ENCODE measurements at regions of chr1 and their contacts with region 1.

Region 1: GRCh38 chr1:206663832-206664652 is 20.7 kb upstream of the MAPKAPK2 start:
- DNase-seq: peak; percentile 86
- ATAC-seq: peak; percentile 80
- H3K4me3 ChIP-seq: peak overlapping the region in 2 of 5 experiments; percentile 31 to 34
- H3K4me3 Mint-ChIP-seq: peak overlapping the region; percentile 64
- H3K27ac ChIP-seq: no peak overlapping the region
- H3K27ac Mint-ChIP-seq: no peak overlapping the region
- H3K4me1 ChIP-seq: peaks cover 14 to 16% of the 10 kb centered on the region in 2 donors
- H3K4me1 Mint-ChIP-seq: peaks cover 24% of the 10 kb centered on the region
- H3K27me3 ChIP-seq: peaks cover 0 to 48% (median 15%) of the 10 kb centered on the region in 4 experiments
- H3K27me3 Mint-ChIP-seq: peaks cover 40% of the 10 kb centered on the region
- CTCF ChIP-seq: peak; percentile 89

Region 2: GRCh38 chr1:206479183-206480125 is 184.6 kb before region 1 on chr1:
- CTCF ChIA-PET with region 1: interaction called, 34 read pairs
- POLR2A ChIA-PET with region 1: no interaction called
- intact Hi-C with region 1: loop called (anchors 1 kb)
- DNase-seq: peak; percentile 80
- ATAC-seq: peak; percentile 79
- H3K4me3 ChIP-seq: no peak overlapping the region
- H3K4me3 Mint-ChIP-seq: no peak overlapping the region
- H3K27ac ChIP-seq: no peak overlapping the region
- H3K27ac Mint-ChIP-seq: peak overlapping the region; percentile 42
- H3K4me1 ChIP-seq: no peaks in the 10 kb centered on the region
- H3K4me1 Mint-ChIP-seq: peaks cover 4% of the 10 kb centered on the region
- H3K27me3 ChIP-seq: no peaks in the 10 kb centered on the region
- H3K27me3 Mint-ChIP-seq: no peaks in the 10 kb centered on the region
- CTCF ChIP-seq: peak; percentile 78

Region 3: GRCh38 chr1:206612129-206612876 is 51.7 kb before region 1 on chr1 and contains the start of gene EIF2D:
- CTCF ChIA-PET with region 1: interaction called, 48 read pairs
- POLR2A ChIA-PET with region 1: interaction called, 5 read pairs
- intact Hi-C with region 1: loop called (anchors 1 kb)
- DNase-seq: peak; percentile 96
- ATAC-seq: peak; percentile 100
- H3K4me3 ChIP-seq: peak within 1 kb of the TSS; percentile 61 to 87 (median 86)
- H3K4me3 Mint-ChIP-seq: peak within 1 kb of the TSS; percentile 93
- H3K27ac ChIP-seq: peak within 1 kb of the TSS; percentile 70 to 93
- H3K27ac Mint-ChIP-seq: peak within 1 kb of the TSS; percentile 96
- H3K4me1 ChIP-seq: peaks cover 8 to 12% of the 10 kb centered on the region in 2 donors
- H3K4me1 Mint-ChIP-seq: peaks cover 19% of the 10 kb centered on the region
- H3K27me3 ChIP-seq: no peaks in the 10 kb centered on the region
- H3K27me3 Mint-ChIP-seq: no peaks in the 10 kb centered on the region
- CTCF ChIP-seq: peak; percentile 88
- total RNA-seq, gene EIF2D: 60.6 and 62.2 TPM in 2 replicates

Region 4: GRCh38 chr1:206684478-206685333 is 20.7 kb after region 1 on chr1 and contains the start of gene MAPKAPK2:
- CTCF ChIA-PET with region 1: interaction called, 23 read pairs
- POLR2A ChIA-PET with region 1: interaction called, 4 read pairs
- intact Hi-C with region 1: loop called (anchors 1 kb)
- DNase-seq: peak; percentile 83
- ATAC-seq: peak; percentile 70
- H3K4me3 ChIP-seq: peak within 1 kb of the TSS; percentile 69 to 91 (median 87)
- H3K4me3 Mint-ChIP-seq: peak within 1 kb of the TSS; percentile 100
- H3K27ac ChIP-seq: peak within 1 kb of the TSS; percentile 76 to 86
- H3K27ac Mint-ChIP-seq: peak within 1 kb of the TSS; percentile 96
- H3K4me1 ChIP-seq: peaks cover 54 to 72% of the 10 kb centered on the region in 2 donors
- H3K4me1 Mint-ChIP-seq: peaks cover 82% of the 10 kb centered on the region
- H3K27me3 ChIP-seq: no peaks in the 10 kb centered on the region
- H3K27me3 Mint-ChIP-seq: no peaks in the 10 kb centered on the region
- CTCF ChIP-seq: no peak
- total RNA-seq, gene MAPKAPK2: 85.8 and 91.1 TPM in 2 replicates

Region 5: DNA sequence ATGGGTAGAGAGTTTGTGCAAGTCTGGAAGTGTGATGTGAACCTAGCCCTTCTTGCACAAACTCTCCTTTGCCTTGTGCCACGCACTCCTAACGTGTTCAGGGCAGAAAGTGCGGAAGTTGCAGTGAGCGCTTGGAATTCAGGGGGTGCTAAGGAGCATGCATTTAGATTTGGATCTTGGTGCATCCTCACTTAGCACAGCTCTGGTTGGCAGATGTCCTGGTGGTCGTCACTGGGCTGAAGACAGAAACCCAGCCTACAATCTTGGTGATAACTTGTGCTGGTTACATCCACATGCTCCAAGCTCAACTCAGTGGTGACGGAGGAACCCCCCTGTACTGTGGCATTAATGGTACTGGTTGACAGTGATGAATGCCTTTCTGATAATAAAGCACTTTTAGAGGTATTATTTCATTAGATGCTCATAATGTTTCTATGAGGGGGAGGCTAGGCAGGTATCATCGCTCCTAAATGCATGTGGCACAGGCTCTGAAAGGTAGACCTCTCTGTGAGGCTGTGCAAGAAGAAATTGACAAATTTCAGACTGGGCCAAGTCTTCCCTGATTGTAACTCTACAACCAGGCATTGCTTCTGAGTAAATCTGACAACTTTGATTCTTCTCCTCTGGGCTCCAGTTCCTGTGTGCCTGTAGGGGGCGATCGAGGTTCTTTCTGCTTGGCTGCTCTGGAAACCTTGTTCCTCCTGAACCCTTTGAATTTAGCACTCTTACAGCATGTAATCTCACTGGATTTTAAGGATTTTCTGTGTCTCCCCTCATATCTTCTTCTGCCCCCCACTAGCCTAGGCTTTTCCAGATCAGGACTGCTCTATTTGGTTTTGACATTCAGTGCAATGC is 61.3 kb after region 1 on chr1:
- CTCF ChIA-PET with region 1: interaction called, 145 read pairs
- POLR2A ChIA-PET with region 1: interaction called, 7 read pairs
- intact Hi-C with region 1: loop called (anchors 2 kb)
- DNase-seq: peak; percentile 68
- ATAC-seq: peak; percentile 46
- H3K4me3 ChIP-seq: no peak overlapping the region
- H3K4me3 Mint-ChIP-seq: peak overlapping the region; percentile 18
- H3K27ac ChIP-seq: no peak overlapping the region
- H3K27ac Mint-ChIP-seq: peak overlapping the region; percentile 65
- H3K4me1 ChIP-seq: peaks cover 32 to 33% of the 10 kb centered on the region in 2 donors
- H3K4me1 Mint-ChIP-seq: peaks cover 60% of the 10 kb centered on the region
- H3K27me3 ChIP-seq: no peaks in the 10 kb centered on the region
- H3K27me3 Mint-ChIP-seq: no peaks in the 10 kb centered on the region
- CTCF ChIP-seq: peak; percentile 28

Region 6: GRCh38 chr1:206930210-206930798 is 266.3 kb after region 1 on chr1:
- CTCF ChIA-PET with region 1: interaction called, 18 read pairs
- POLR2A ChIA-PET with region 1: no interaction called
- intact Hi-C with region 1: no loop called
- DNase-seq: peak; percentile 79
- ATAC-seq: peak; percentile 78
- H3K4me3 ChIP-seq: peak overlapping the region in 4 of 5 experiments; percentile 19 to 54 (median 29)
- H3K4me3 Mint-ChIP-seq: peak overlapping the region; percentile 86
- H3K27ac ChIP-seq: peak overlapping the region; percentile 88 to 96
- H3K27ac Mint-ChIP-seq: peak overlapping the region; percentile 99
- H3K4me1 ChIP-seq: peaks cover 80 to 83% of the 10 kb centered on the region in 2 donors
- H3K4me1 Mint-ChIP-seq: peaks cover 68% of the 10 kb centered on the region
- H3K27me3 ChIP-seq: no peaks in the 10 kb centered on the region
- H3K27me3 Mint-ChIP-seq: no peaks in the 10 kb centered on the region
- CTCF ChIP-seq: no peak

Region 7: DNA sequence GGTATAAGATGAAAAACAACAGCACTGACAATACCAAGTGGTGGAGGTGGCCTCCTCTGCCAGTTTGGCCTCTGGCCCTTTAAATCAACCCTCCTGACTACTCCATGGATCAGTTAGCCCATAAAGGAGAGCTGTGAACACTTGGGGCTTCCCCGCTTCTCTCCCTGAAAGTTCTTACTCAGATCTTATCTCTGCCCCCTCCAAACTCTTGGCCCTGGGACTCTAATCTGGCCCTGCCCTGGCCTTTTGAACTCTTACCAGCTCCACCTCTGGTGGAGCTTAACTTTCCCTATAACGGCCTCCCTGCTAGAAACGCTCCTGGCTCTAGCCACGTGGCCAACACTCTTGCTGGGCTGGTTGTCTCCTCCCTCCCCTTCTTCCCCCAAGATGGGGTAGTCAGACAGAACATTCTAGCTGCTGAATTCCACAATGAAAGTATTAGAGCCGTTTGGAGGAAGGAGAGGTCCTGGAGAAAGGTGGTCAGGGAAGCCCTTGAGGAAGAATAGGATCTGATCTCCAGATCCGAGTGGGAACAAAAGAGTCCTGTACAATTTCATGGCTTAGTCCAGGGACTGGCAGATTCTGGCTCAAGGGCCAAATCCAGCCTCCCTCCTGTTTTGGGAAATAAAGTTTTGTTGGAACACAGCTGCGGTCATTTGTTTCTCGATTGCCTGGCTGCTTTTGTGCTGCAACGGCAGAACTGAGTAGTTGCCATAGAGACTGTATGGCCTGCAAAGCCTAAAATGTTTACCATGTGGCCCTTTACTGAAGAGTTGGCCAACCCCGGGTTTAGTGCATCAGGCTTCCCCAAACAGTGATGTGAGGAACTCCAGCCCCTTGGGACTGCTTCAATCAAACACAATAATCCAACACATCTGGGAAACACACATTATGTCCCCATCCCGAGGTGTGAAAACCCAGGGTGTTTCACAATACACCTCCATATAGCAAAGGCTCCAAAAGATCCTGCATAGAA is 291.7 kb after region 1 on chr1:
- CTCF ChIA-PET with region 1: no interaction called
- POLR2A ChIA-PET with region 1: no interaction called
- intact Hi-C with region 1: no loop called
- DNase-seq: no peak
- ATAC-seq: no peak
- H3K4me3 ChIP-seq: no peak overlapping the region
- H3K4me3 Mint-ChIP-seq: no peak overlapping the region
- H3K27ac ChIP-seq: no peak overlapping the region
- H3K27ac Mint-ChIP-seq: no peak overlapping the region
- H3K4me1 ChIP-seq: peaks cover 7 to 11% of the 10 kb centered on the region in 2 donors
- H3K4me1 Mint-ChIP-seq: peaks cover 26% of the 10 kb centered on the region
- H3K27me3 ChIP-seq: no peaks in the 10 kb centered on the region
- H3K27me3 Mint-ChIP-seq: peaks cover 3% of the 10 kb centered on the region
- CTCF ChIP-seq: no peak